GM10248 (cell line): ENCODE measurements at regions of chr11 and their contacts with region 1.

Region 1: DNA sequence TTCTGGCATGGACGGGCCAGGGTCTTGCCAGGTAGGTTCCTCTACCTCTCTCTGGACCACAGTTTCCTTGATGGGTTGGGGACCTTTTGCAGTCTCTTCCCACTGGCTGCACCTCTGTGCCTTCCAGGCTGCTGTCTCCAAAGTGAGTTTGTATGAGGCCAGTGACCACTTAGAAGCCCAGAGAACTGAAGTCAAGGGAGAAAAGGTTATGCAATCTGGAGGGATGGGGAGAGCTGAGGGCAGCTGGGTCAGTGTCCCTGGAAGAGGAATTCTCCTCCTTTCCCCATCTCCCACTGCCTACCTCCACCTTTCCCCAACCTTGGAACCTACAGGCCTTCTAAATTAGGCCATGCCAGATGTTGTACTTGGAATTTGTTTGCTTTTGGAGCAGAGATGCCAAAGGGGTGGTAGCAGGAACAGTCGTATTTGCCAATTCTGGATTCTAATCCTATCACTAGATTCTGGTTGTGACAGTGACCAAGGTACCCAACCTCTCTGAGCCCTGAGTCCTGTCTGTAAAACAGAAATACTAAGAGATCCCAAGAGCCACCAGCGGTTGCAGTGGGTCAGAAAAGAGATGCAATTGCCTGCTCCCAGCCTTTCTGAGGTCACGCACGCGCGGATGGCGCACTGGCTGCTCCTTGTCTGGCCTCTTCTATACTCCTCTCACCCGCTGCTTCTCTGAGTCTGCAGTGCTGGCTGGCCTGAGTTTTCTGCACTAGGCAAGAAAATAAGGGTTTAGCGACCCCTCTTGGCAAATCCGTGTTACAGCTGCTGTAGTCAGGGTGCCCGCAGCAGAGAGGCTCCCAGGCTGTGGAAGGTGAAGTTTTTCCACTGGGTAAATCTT is 10.7 kb upstream of the ACCSL start:
- DNase-seq: peak; percentile 46
- CTCF ChIP-seq: peak; percentile 46

Region 2: GRCh38 chr11:43895601-43896000 is 141.4 kb before region 1 on chr11:
- CTCF ChIA-PET with region 1: interaction called, 18 read pairs
- POLR2A ChIA-PET with region 1: no interaction called
- DNase-seq: no peak
- CTCF ChIP-seq: no peak

Region 3: GRCh38 chr11:43987384-43988039 is 49.5 kb before region 1 on chr11:
- CTCF ChIA-PET with region 1: no interaction called
- POLR2A ChIA-PET with region 1: no interaction called
- DNase-seq: no peak
- CTCF ChIP-seq: no peak

Region 4: GRCh38 chr11:44208976-44209603 is 172.1 kb after region 1 on chr11:
- CTCF ChIA-PET with region 1: no interaction called
- POLR2A ChIA-PET with region 1: no interaction called
- DNase-seq: no peak
- CTCF ChIP-seq: no peak